K562 (cell line): ENCODE measurements at regions of chr3 and their contacts with region 1.

Region 1: GRCh38 chr3:41792806-41793205 is 169.1 kb downstream of the ULK4 start:
- DNase-seq: no peak
- ATAC-seq: no peak
- H3K4me3 ChIP-seq: no peak overlapping the region
- H3K27ac ChIP-seq: no peak overlapping the region
- H3K4me1 ChIP-seq: no peaks in the 10 kb centered on the region
- H3K27me3 ChIP-seq: peaks cover 0 to 3% of the 10 kb centered on the region in 2 experiments; a peak in 1 of 5 replicates
- CTCF ChIP-seq: no peak
- EP300 ChIP-seq: no peak
- POLR2A ChIP-seq: no peak
- RAD21 ChIP-seq: no peak

Region 2: DNA sequence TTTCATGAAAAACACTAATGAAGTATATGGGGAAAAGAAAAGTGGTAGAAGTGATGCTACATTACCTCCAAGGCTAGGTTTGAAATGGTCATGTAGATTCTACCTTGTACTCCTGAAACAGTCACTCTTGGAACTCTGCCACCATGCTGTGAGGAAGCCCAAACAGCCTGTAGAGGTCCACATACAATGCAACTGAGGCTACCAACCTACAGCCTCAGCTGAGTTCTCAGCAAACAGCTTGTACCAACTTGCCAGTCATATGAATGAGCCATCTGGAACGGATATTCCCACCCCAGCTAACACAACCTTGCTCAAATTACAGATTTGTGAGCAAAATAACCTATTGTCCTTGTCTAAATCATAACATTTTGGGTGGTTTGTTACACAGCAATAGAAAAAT is 24.4 kb before region 1 on chr3:
- CTCF ChIA-PET with region 1: no interaction called
- POLR2A ChIA-PET with region 1: no interaction called
- in situ Hi-C with region 1: no loop called
- intact Hi-C with region 1: loop called (anchors 1 kb)
- DNase-seq: no peak
- ATAC-seq: no peak
- H3K4me3 ChIP-seq: no peak overlapping the region
- H3K27ac ChIP-seq: no peak overlapping the region
- H3K4me1 ChIP-seq: no peaks in the 10 kb centered on the region
- H3K27me3 ChIP-seq: no peaks in the 10 kb centered on the region; a peak in 1 of 5 replicates
- CTCF ChIP-seq: no peak
- EP300 ChIP-seq: no peak
- POLR2A ChIP-seq: no peak
- RAD21 ChIP-seq: no peak

Region 3: GRCh38 chr3:41808152-41808551 is 15.3 kb after region 1 on chr3:
- CTCF ChIA-PET with region 1: no interaction called
- POLR2A ChIA-PET with region 1: no interaction called
- in situ Hi-C with region 1: no loop called
- intact Hi-C with region 1: no loop called
- DNase-seq: no peak
- ATAC-seq: no peak
- H3K4me3 ChIP-seq: no peak overlapping the region
- H3K27ac ChIP-seq: no peak overlapping the region
- H3K4me1 ChIP-seq: no peaks in the 10 kb centered on the region
- H3K27me3 ChIP-seq: peaks cover 0 to 8% of the 10 kb centered on the region in 2 experiments; a peak in 1 of 5 replicates
- CTCF ChIP-seq: no peak
- EP300 ChIP-seq: no peak
- POLR2A ChIP-seq: no peak
- RAD21 ChIP-seq: no peak